GM18951 (cell line): ENCODE measurements at regions of chr15 and their contacts with region 1.

Region 1: GRCh38 chr15:37995461-37996347 is 61.3 kb downstream of the TMCO5A start:
- POLR2A ChIP-seq: no peak

Region 2: GRCh38 chr15:38367476-38367875 is 371.8 kb after region 1 on chr15:
- in situ Hi-C with region 1: loop called (anchors 10 kb)
- POLR2A ChIP-seq: no peak